Transverse colon (tissue), 4 donors: ENCODE measurements at regions of chr19 and their contacts with region 1.

Region 1: DNA sequence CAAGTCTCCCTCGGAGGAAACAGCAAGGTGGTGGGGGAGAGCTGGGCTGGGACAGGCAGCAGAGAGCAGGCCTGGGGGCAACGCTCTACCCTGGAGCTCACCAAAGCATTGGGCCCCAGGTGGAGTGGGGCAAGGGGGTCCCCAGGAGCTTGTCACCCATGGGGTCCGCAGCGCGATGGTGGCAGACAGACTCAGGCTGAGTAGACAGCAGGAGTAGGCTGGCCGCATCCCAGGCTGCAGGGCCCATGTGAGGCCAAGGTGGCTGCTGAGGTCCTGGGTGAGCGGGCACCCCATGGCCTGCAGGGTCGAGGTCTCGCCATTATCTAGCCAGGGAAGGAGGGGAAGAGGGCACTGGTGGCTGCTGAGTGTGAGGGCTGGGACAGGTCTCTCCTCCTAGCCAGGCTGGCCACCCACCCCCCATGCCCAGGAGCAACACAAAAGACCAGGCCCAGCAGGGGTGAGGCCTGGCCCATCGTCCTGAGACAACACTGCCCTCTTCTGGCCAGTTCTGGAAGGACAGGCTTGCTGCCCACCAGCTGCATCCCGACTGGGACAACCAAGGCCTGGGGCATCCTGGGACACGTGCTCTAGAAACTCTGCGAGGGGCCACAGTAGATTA is 33.1 kb downstream of the CEBPG start:
- DNase-seq: peak; percentile 82
- H3K4me3 ChIP-seq: no peak overlapping the region
- H3K27ac ChIP-seq: no peak overlapping the region
- H3K4me1 ChIP-seq: peaks cover 0 to 10% (median 4%) of the 10 kb centered on the region in 4 donors
- H3K27me3 ChIP-seq: no peaks in the 10 kb centered on the region
- CTCF ChIP-seq: peak; percentile 93 to 97 (median 96)
- EP300 ChIP-seq: no peak
- POLR2A ChIP-seq: no peak

Region 2: DNA sequence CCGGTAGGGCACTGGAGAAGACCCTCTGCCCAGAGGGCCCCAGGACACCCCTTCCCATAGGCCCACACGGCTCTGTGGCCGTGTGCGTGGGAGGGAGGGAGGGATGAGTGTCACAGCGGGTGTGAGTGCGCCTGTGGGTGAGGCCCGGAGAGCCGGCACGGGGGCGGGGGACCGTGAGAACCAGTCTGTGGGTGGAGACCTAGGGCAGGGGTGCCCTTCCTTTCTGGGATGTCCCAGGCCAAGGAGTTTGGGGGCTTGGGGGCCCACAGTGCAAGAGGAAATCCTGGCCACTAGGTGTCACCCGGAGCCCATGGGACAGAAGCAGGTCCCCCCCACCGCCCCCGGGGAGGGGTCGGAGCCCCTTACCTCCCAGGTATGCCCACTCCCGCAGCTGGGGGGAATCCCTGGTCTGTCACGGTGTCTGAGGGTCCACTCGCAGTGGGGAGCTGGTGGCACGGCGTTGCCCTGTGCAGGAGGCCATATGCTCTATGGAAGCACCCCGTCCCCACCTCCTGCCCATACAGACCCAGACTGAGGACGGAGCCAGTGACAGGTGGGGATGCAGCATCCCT is 165.0 kb before region 1 on chr19:
- in situ Hi-C with region 1: loop called (anchors 5 kb)
- intact Hi-C with region 1: loop called (anchors 2 kb)
- DNase-seq: peak; percentile 33
- H3K4me3 ChIP-seq: no peak overlapping the region
- H3K27ac ChIP-seq: no peak overlapping the region
- H3K4me1 ChIP-seq: peaks cover 2 to 11% (median 8%) of the 10 kb centered on the region in 4 donors
- H3K27me3 ChIP-seq: no peaks in the 10 kb centered on the region
- CTCF ChIP-seq: peak; percentile 69 to 85 (median 71)
- EP300 ChIP-seq: no peak
- POLR2A ChIP-seq: no peak